Endothelial cell of umbilical vein (primary cell): ENCODE measurements at regions of chr19 and their contacts with region 1.

Region 1: DNA sequence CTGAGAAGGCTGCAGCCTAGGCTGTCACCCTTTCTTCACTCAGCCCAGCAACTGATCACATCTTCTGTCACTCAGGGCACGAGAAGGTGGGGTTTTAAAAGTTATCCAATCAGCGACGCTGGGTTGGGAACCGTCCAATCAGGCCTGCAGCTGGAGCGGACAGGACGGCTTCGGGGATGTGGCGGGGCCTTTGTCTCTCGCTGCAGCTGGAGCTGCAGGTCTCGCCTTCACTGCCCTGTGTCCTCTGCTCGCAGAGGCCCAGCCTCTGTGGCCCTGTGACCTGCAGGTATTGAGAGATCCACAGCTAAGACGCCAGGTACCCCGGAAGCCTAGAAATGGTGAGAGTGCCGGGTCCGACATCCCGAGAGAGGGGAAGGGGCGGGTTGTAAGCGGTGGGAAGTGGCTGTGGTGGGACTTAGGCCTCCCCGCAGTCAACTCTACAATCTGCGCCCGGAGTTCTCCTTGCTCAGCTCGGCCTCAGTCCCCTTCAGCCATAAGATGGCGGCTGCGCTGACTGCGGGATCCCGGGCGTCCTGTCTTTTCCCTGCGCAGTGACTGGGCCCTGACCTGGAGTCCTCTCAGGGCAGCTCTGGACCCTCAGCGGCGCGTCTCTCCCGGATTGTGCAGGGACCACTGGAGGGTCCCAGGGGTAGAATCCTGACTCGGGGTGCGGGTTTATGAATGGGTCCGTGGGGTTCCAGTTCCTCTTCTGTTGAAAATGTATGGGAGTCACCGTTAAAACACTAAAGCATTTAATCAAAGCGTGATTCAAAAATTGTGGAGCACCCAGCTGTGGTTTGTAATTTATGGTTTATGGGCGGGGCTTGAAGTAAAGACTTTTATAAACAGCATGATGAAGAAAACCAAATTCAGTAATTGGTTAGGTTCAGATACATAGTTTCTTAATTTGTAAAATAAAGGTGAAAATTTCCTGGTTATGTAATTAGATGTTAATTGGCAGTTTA is at the start of gene ZNF714:
- DNase-seq: peak; percentile 94
- H3K4me3 ChIP-seq: peak within 1 kb of the TSS; percentile 61 to 70 (median 69)
- H3K27ac ChIP-seq: peak within 1 kb of the TSS; percentile 53
- H3K4me1 ChIP-seq: no peaks in the 10 kb centered on the region
- H3K27me3 ChIP-seq: no peaks in the 10 kb centered on the region
- CTCF ChIP-seq: no peak
- POLR2A ChIP-seq: peak; percentile 66
- total RNA-seq, gene ZNF714: 11.2 and 15.0 TPM in 2 replicates

Region 2: GRCh38 chr19:21020298-21021227 is 61.7 kb before region 1 on chr19 and contains the start of gene ZNF430:
- CTCF ChIA-PET with region 1: no interaction called
- POLR2A ChIA-PET with region 1: no interaction called
- dilution Hi-C with region 1: no loop called
- intact Hi-C with region 1: loop called (anchors 2 kb)
- DNase-seq: peak; percentile 93
- H3K4me3 ChIP-seq: peak within 1 kb of the TSS; percentile 86 to 89 (median 87)
- H3K27ac ChIP-seq: peak within 1 kb of the TSS; percentile 75
- H3K4me1 ChIP-seq: peaks cover 3% of the 10 kb centered on the region
- H3K27me3 ChIP-seq: no peaks in the 10 kb centered on the region
- CTCF ChIP-seq: no peak
- POLR2A ChIP-seq: peak; percentile 48
- total RNA-seq, gene ZNF430: 11.1 and 13.4 TPM in 2 replicates